ENCODE measurements at regions of chr15 and their contacts with region 1.

Region 1: GRCh38 chr15:89171136-89172072 is 50.0 kb downstream of the RLBP1 start:
- DNase-seq: peak; percentile 60
- H3K4me3 ChIP-seq: peak overlapping the region in 1 of 2 experiments; percentile 32; a peak in 1 of 4 replicates
- H3K27ac ChIP-seq: no peak overlapping the region
- H3K4me1 ChIP-seq: peaks cover 13 to 20% of the 10 kb centered on the region in 2 experiments; a peak in 3 of 4 replicates
- H3K27me3 ChIP-seq: no peaks in the 10 kb centered on the region
- CTCF ChIP-seq: peak; percentile 83
- EP300 ChIP-seq: no peak
- RAD21 ChIP-seq: peak; percentile 84

Region 2: GRCh38 chr15:89068325-89068784 is 103.0 kb before region 1 on chr15:
- CTCF ChIA-PET with region 1: interaction called, 363 read pairs
- POLR2A ChIA-PET with region 1: no interaction called
- DNase-seq: no peak
- H3K4me3 ChIP-seq: no peak overlapping the region
- H3K27ac ChIP-seq: no peak overlapping the region
- H3K4me1 ChIP-seq: no peaks in the 10 kb centered on the region
- H3K27me3 ChIP-seq: no peaks in the 10 kb centered on the region
- CTCF ChIP-seq: no peak
- EP300 ChIP-seq: no peak
- RAD21 ChIP-seq: no peak

Region 3: GRCh38 chr15:89112341-89112971 is 58.9 kb before region 1 on chr15:
- CTCF ChIA-PET with region 1: interaction called, 13 read pairs
- POLR2A ChIA-PET with region 1: no interaction called
- DNase-seq: no peak
- H3K4me3 ChIP-seq: no peak overlapping the region
- H3K27ac ChIP-seq: peak overlapping the region; percentile 51 to 68
- H3K4me1 ChIP-seq: peaks cover 14 to 54% of the 10 kb centered on the region in 2 experiments
- H3K27me3 ChIP-seq: no peaks in the 10 kb centered on the region
- CTCF ChIP-seq: no peak
- EP300 ChIP-seq: no peak; a peak in 1 of 4 replicates
- RAD21 ChIP-seq: no peak

Region 4: GRCh38 chr15:89129123-89129815 is 42.1 kb before region 1 on chr15:
- CTCF ChIA-PET with region 1: interaction called, 27 read pairs
- POLR2A ChIA-PET with region 1: no interaction called
- DNase-seq: peak; percentile 59
- H3K4me3 ChIP-seq: no peak overlapping the region; a peak in 1 of 4 replicates
- H3K27ac ChIP-seq: no peak overlapping the region
- H3K4me1 ChIP-seq: peaks cover 0 to 4% of the 10 kb centered on the region in 2 experiments; a peak in 3 of 4 replicates
- H3K27me3 ChIP-seq: no peaks in the 10 kb centered on the region
- CTCF ChIP-seq: peak; percentile 87
- EP300 ChIP-seq: no peak
- RAD21 ChIP-seq: peak; percentile 72

Region 5: GRCh38 chr15:89150762-89151664 is 20.4 kb before region 1 on chr15:
- CTCF ChIA-PET with region 1: interaction called, 21 read pairs
- POLR2A ChIA-PET with region 1: no interaction called
- DNase-seq: no peak
- H3K4me3 ChIP-seq: no peak overlapping the region
- H3K27ac ChIP-seq: no peak overlapping the region; a peak in 1 of 4 replicates
- H3K4me1 ChIP-seq: no peaks in the 10 kb centered on the region; a peak in 1 of 4 replicates
- H3K27me3 ChIP-seq: no peaks in the 10 kb centered on the region
- CTCF ChIP-seq: no peak
- EP300 ChIP-seq: no peak
- RAD21 ChIP-seq: no peak

Measured in SK-N-SH (cell line).